Calu3 (cell line): ENCODE measurements at regions of chr3 and their contacts with region 1.

Region 1: DNA sequence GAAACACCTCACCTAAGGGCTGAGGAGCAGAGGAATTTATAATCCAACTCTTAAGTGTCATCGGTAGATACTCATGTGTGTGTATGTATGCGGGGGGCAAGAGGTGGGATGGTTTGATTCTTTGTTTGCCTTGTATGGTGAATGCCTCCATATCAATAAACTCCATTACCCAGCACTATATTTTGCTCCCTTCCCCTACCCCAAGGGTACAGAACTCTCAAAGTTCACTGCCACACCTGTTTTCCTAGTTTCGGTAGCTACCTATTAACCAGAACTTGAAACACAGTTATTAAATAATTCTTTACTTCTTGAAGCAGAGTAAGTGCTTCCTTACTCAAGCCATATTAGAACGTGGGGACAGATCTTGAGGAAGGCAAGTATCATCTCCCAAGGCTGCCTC is 400.8 kb upstream of the SUCLG2 start:
- DNase-seq: no peak
- H3K4me3 Mint-ChIP-seq: peak overlapping the region; percentile 17
- H3K27ac Mint-ChIP-seq: no peak overlapping the region
- H3K4me1 Mint-ChIP-seq: peaks cover 50% of the 10 kb centered on the region
- H3K27me3 Mint-ChIP-seq: no peaks in the 10 kb centered on the region
- CTCF ChIP-seq: no peak

Region 2: DNA sequence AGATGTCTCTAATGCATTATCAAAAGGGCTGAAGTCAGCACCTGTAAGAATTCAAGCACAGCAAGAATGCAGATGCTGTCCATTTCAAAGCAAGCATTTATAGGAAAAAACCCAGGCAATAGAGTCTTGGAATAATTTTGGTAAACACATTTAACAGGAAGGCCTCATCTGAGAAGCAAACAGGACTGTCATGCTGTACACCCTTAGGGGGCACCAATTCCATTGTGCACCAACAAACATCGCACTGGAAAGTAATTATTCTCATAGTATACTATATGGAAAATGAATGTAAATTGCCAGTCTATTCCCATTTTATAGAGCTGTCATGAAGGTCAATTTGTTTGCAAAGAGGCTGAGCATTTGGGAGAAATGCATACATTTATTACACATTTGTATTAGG is 153.5 kb before region 1 on chr3:
- CTCF ChIA-PET with region 1: no interaction called
- intact Hi-C with region 1: no loop called
- DNase-seq: no peak
- H3K4me3 Mint-ChIP-seq: no peak overlapping the region
- H3K27ac Mint-ChIP-seq: no peak overlapping the region
- H3K4me1 Mint-ChIP-seq: no peaks in the 10 kb centered on the region
- H3K27me3 Mint-ChIP-seq: no peaks in the 10 kb centered on the region
- CTCF ChIP-seq: no peak

Region 3: GRCh38 chr3:68088216-68088615 is 33.0 kb after region 1 on chr3:
- CTCF ChIA-PET with region 1: interaction called, 4 read pairs
- intact Hi-C with region 1: loop called (anchors 2 kb)
- DNase-seq: peak; percentile 57
- H3K4me3 Mint-ChIP-seq: peak overlapping the region; percentile 25
- H3K27ac Mint-ChIP-seq: peak overlapping the region; percentile 39
- H3K4me1 Mint-ChIP-seq: peaks cover 29% of the 10 kb centered on the region
- H3K27me3 Mint-ChIP-seq: peaks cover 19% of the 10 kb centered on the region
- CTCF ChIP-seq: no peak